ENCODE measurements at regions of chr13 and their contacts with region 1.

Region 1: GRCh38 chr13:45280751-45281634 is 60.0 kb downstream of the TPT1 start:
- DNase-seq: peak; percentile 71
- ATAC-seq: peak; percentile 99
- H3K4me3 Mint-ChIP-seq: no peak overlapping the region
- H3K27ac Mint-ChIP-seq: peak overlapping the region; percentile 18; the same call in 1 of the 2 replicates
- H3K4me1 Mint-ChIP-seq: peaks cover 6% of the 10 kb centered on the region
- H3K27me3 Mint-ChIP-seq: no peaks in the 10 kb centered on the region
- CTCF ChIP-seq: no peak

Region 2: GRCh38 chr13:44435142-44435982 is 845.6 kb before region 1 on chr13:
- CTCF ChIA-PET with region 1: no interaction called
- POLR2A ChIA-PET with region 1: no interaction called
- DNase-seq: peak; percentile 97
- ATAC-seq: peak; percentile 66
- H3K4me3 Mint-ChIP-seq: peak overlapping the region; percentile 94
- H3K27ac Mint-ChIP-seq: peak overlapping the region; percentile 99
- H3K4me1 Mint-ChIP-seq: peaks cover 27% of the 10 kb centered on the region
- H3K27me3 Mint-ChIP-seq: no peaks in the 10 kb centered on the region
- CTCF ChIP-seq: no peak

Region 3: DNA sequence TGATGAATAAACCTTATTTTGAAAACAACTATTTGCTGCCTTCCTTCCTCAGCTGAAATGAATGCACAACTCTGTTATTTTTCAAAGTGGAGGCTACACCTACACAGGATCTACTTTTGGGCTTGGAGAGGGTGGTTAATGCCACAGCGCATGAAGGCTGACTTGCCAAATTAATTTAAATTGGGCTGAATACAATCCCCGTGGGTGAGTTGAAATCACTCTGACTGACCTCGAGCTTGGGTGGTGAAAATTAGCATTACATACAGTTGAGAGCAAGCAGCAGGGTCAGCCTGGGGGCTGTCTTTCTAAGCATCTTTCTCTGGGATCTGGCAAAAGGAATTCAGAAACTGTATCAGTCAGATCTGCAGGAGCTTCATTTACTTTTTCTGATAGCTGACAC is 21.5 kb after region 1 on chr13:
- CTCF ChIA-PET with region 1: interaction called, 10 read pairs
- POLR2A ChIA-PET with region 1: no interaction called
- DNase-seq: no peak
- ATAC-seq: peak; percentile 23
- H3K4me3 Mint-ChIP-seq: no peak overlapping the region
- H3K27ac Mint-ChIP-seq: peak overlapping the region; percentile 59
- H3K4me1 Mint-ChIP-seq: peaks cover 24% of the 10 kb centered on the region
- H3K27me3 Mint-ChIP-seq: no peaks in the 10 kb centered on the region
- CTCF ChIP-seq: no peak